Vagina (tissue), 2 donors: ENCODE measurements at regions of chr11 and their contacts with region 1.

Region 1: DNA sequence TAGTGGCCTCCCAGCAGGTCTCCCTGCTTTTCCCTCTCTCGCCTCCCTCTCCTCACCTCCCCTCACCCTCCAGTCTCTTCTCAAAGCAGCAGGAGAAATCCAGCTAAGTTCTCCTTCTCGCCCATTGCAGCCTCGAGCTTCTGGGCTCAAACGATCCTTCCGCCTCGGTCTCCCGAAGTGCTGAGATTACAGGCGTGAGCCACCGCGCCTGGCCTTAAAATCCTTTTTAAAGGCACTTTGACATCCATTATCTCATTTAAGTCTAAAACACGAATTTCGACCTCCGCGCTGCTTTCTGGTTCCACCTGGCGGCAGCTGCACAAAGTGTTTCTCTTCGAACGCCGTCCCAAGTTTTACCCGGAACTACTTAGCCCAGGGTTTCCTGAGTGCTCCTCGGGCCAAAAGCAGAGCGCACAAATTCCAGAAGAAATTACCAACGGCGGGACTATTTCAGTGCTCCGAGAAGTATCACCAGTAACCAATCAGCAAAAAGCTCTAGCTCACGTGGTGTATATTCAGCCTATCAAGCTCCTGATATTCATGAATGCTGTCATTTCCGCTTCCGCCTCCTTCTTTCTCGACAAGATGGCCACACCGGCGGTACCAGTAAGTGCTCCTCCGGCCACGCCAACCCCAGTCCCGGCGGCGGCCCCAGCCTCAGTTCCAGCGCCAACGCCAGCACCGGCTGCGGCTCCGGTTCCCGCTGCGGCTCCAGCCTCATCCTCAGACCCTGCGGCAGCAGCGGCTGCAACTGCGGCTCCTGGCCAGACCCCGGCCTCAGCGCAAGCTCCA is at the start of gene EIF3F:
- DNase-seq: peak; percentile 98 to 99
- H3K4me3 ChIP-seq: peak within 1 kb of the TSS; percentile 70 to 90
- H3K27ac ChIP-seq: peak within 1 kb of the TSS; percentile 75
- H3K4me1 ChIP-seq: peaks cover 35% of the 10 kb centered on the region
- H3K27me3 ChIP-seq: no peaks in the 10 kb centered on the region
- CTCF ChIP-seq: peak; percentile 60 to 91 (median 83)
- POLR2A ChIP-seq: no peak
- total RNA-seq, gene EIF3F: 336 TPM

Region 2: GRCh38 chr11:7833527-7833926 is 153.4 kb before region 1 on chr11:
- intact Hi-C with region 1: no loop called
- DNase-seq: no peak
- H3K4me3 ChIP-seq: no peak overlapping the region
- H3K27ac ChIP-seq: no peak overlapping the region
- H3K4me1 ChIP-seq: no peaks in the 10 kb centered on the region
- H3K27me3 ChIP-seq: no peaks in the 10 kb centered on the region
- CTCF ChIP-seq: no peak
- POLR2A ChIP-seq: no peak

Region 3: GRCh38 chr11:7892840-7893254 is 94.1 kb before region 1 on chr11:
- intact Hi-C with region 1: loop called (anchors 10 kb)
- DNase-seq: no peak
- H3K4me3 ChIP-seq: no peak overlapping the region
- H3K27ac ChIP-seq: no peak overlapping the region
- H3K4me1 ChIP-seq: no peaks in the 10 kb centered on the region
- H3K27me3 ChIP-seq: no peaks in the 10 kb centered on the region
- CTCF ChIP-seq: peak in 2 of 3 experiments; percentile 37 to 54
- POLR2A ChIP-seq: no peak

Region 4: DNA sequence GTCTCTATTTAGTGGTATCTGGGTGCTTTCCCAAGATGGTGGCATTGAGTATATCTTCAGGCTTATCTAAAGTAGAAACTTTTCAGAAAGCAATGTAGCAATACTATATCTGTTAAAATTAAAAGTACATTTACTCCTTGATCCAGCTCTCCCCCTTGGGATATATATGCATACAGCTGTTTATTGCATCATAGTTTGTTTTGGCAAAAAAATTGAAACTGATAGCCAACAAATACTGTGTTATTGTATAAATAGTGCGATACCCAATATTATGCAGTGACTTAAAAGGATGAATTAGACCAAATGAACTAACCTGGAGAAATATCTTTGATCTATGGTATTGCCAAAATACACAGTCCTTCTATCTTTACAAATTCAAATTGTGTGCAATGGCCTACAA is 37.0 kb before region 1 on chr11:
- intact Hi-C with region 1: no loop called
- DNase-seq: no peak
- H3K4me3 ChIP-seq: no peak overlapping the region
- H3K27ac ChIP-seq: no peak overlapping the region
- H3K4me1 ChIP-seq: no peaks in the 10 kb centered on the region
- H3K27me3 ChIP-seq: no peaks in the 10 kb centered on the region
- CTCF ChIP-seq: no peak
- POLR2A ChIP-seq: no peak

Region 5: GRCh38 chr11:8070417-8071115 is 83.6 kb after region 1 on chr11:
- intact Hi-C with region 1: no loop called
- DNase-seq: no peak
- H3K4me3 ChIP-seq: no peak overlapping the region
- H3K27ac ChIP-seq: no peak overlapping the region
- H3K4me1 ChIP-seq: peaks cover 28% of the 10 kb centered on the region
- H3K27me3 ChIP-seq: no peaks in the 10 kb centered on the region
- CTCF ChIP-seq: peak in 1 of 3 experiments; percentile 32
- POLR2A ChIP-seq: no peak

Region 6: GRCh38 chr11:8201644-8202365 is 214.8 kb after region 1 on chr11:
- intact Hi-C with region 1: no loop called
- DNase-seq: peak in 1 of 2 donors; percentile 69
- H3K4me3 ChIP-seq: no peak overlapping the region
- H3K27ac ChIP-seq: no peak overlapping the region
- H3K4me1 ChIP-seq: no peaks in the 10 kb centered on the region
- H3K27me3 ChIP-seq: no peaks in the 10 kb centered on the region
- CTCF ChIP-seq: no peak
- POLR2A ChIP-seq: no peak